B cell (primary cell): ENCODE measurements at regions of chr19 and their contacts with region 1.

Region 1: GRCh38 chr19:41310033-41310758 is at the start of gene CCDC97:
- DNase-seq: peak; percentile 97
- ATAC-seq: peak; percentile 77
- H3K4me3 ChIP-seq: peak within 1 kb of the TSS; percentile 59 to 100 (median 68)
- H3K4me3 Mint-ChIP-seq: peak within 1 kb of the TSS; percentile 98
- H3K27ac ChIP-seq: peak within 1 kb of the TSS; percentile 89 to 100
- H3K27ac Mint-ChIP-seq: peak within 1 kb of the TSS; percentile 100
- H3K4me1 ChIP-seq: peaks cover 49 to 62% of the 10 kb centered on the region in 2 donors
- H3K4me1 Mint-ChIP-seq: peaks cover 64% of the 10 kb centered on the region
- H3K27me3 ChIP-seq: no peaks in the 10 kb centered on the region
- H3K27me3 Mint-ChIP-seq: no peaks in the 10 kb centered on the region
- CTCF ChIP-seq: no peak
- total RNA-seq, gene CCDC97: 68.3 and 78.3 TPM in 2 replicates

Region 2: GRCh38 chr19:40974633-40975037 is 335.6 kb before region 1 on chr19:
- CTCF ChIA-PET with region 1: interaction called, 15 read pairs
- POLR2A ChIA-PET with region 1: no interaction called
- intact Hi-C with region 1: no loop called
- DNase-seq: peak; percentile 81
- ATAC-seq: peak; percentile 64
- H3K4me3 ChIP-seq: no peak overlapping the region
- H3K4me3 Mint-ChIP-seq: no peak overlapping the region
- H3K27ac ChIP-seq: no peak overlapping the region
- H3K27ac Mint-ChIP-seq: no peak overlapping the region
- H3K4me1 ChIP-seq: no peaks in the 10 kb centered on the region
- H3K4me1 Mint-ChIP-seq: peaks cover 1% of the 10 kb centered on the region
- H3K27me3 ChIP-seq: peaks cover 0 to 13% (median 6%) of the 10 kb centered on the region in 4 experiments
- H3K27me3 Mint-ChIP-seq: peaks cover 40% of the 10 kb centered on the region
- CTCF ChIP-seq: peak; percentile 93

Region 3: GRCh38 chr19:41206926-41207750 is 103.1 kb before region 1 on chr19:
- CTCF ChIA-PET with region 1: interaction called, 89 read pairs
- POLR2A ChIA-PET with region 1: interaction called, 4 read pairs
- intact Hi-C with region 1: no loop called
- DNase-seq: no peak
- ATAC-seq: no peak
- H3K4me3 ChIP-seq: no peak overlapping the region
- H3K4me3 Mint-ChIP-seq: no peak overlapping the region
- H3K27ac ChIP-seq: no peak overlapping the region
- H3K27ac Mint-ChIP-seq: no peak overlapping the region
- H3K4me1 ChIP-seq: no peaks in the 10 kb centered on the region
- H3K4me1 Mint-ChIP-seq: no peaks in the 10 kb centered on the region
- H3K27me3 ChIP-seq: no peaks in the 10 kb centered on the region
- H3K27me3 Mint-ChIP-seq: no peaks in the 10 kb centered on the region
- CTCF ChIP-seq: no peak

Region 4: GRCh38 chr19:41327576-41328156 is 17.5 kb after region 1 on chr19:
- CTCF ChIA-PET with region 1: interaction called, 15 read pairs
- POLR2A ChIA-PET with region 1: interaction called, 12 read pairs
- intact Hi-C with region 1: loop called (anchors 1 kb)
- DNase-seq: peak; percentile 90
- ATAC-seq: peak; percentile 78
- H3K4me3 ChIP-seq: peak overlapping the region; percentile 8 to 72 (median 39)
- H3K4me3 Mint-ChIP-seq: peak overlapping the region; percentile 88
- H3K27ac ChIP-seq: peak overlapping the region; percentile 76 to 97
- H3K27ac Mint-ChIP-seq: peak overlapping the region; percentile 98
- H3K4me1 ChIP-seq: peaks cover 59 to 80% of the 10 kb centered on the region in 2 donors
- H3K4me1 Mint-ChIP-seq: peaks cover 72% of the 10 kb centered on the region
- H3K27me3 ChIP-seq: no peaks in the 10 kb centered on the region
- H3K27me3 Mint-ChIP-seq: no peaks in the 10 kb centered on the region
- CTCF ChIP-seq: no peak

Region 5: GRCh38 chr19:41363753-41364523 is 53.7 kb after region 1 on chr19 and contains the start of gene B9D2:
- CTCF ChIA-PET with region 1: interaction called, 18 read pairs
- POLR2A ChIA-PET with region 1: interaction called, 6 read pairs
- intact Hi-C with region 1: no loop called
- DNase-seq: peak; percentile 99
- ATAC-seq: peak; percentile 92
- H3K4me3 ChIP-seq: peak within 1 kb of the TSS; percentile 75 to 97 (median 86)
- H3K4me3 Mint-ChIP-seq: peak within 1 kb of the TSS; percentile 95
- H3K27ac ChIP-seq: peak within 1 kb of the TSS; percentile 99 to 100
- H3K27ac Mint-ChIP-seq: peak within 1 kb of the TSS; percentile 100
- H3K4me1 ChIP-seq: peaks cover 12 to 24% of the 10 kb centered on the region in 2 donors
- H3K4me1 Mint-ChIP-seq: peaks cover 27% of the 10 kb centered on the region
- H3K27me3 ChIP-seq: no peaks in the 10 kb centered on the region
- H3K27me3 Mint-ChIP-seq: no peaks in the 10 kb centered on the region
- CTCF ChIP-seq: no peak
- total RNA-seq, gene B9D2: 17.5 and 17.8 TPM in 2 replicates

Region 6: DNA sequence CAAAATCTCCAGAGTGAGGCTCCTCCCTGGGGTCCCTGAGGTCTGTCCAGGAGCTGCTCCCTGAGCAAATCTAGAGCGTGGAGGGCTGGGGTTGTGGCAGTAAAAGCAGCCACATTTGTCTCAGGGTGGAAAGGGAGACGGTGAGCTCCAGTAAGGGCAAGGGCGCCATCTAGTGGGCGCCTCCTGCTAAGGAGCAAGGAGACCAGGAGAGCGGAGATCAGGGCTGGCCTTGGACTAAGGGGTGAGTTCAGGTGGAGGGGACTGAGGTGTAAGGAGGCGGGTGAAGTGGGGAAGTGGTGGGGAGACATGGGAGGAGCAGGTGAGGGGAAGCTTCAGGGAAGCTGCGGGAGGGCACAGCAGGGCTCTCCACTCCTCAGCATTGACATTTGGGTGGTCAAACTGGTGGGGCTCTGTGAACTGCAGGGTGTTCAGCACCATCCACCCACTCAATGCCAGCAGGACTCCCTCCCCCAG is 260.5 kb after region 1 on chr19:
- CTCF ChIA-PET with region 1: interaction called, 21 read pairs
- POLR2A ChIA-PET with region 1: no interaction called
- intact Hi-C with region 1: no loop called
- DNase-seq: peak; percentile 88
- ATAC-seq: peak; percentile 98
- H3K4me3 ChIP-seq: no peak overlapping the region
- H3K4me3 Mint-ChIP-seq: no peak overlapping the region
- H3K27ac ChIP-seq: no peak overlapping the region
- H3K27ac Mint-ChIP-seq: no peak overlapping the region
- H3K4me1 ChIP-seq: peaks cover 9 to 12% of the 10 kb centered on the region in 2 donors
- H3K4me1 Mint-ChIP-seq: peaks cover 11% of the 10 kb centered on the region
- H3K27me3 ChIP-seq: no peaks in the 10 kb centered on the region
- H3K27me3 Mint-ChIP-seq: peaks cover under 1% of the 10 kb centered on the region
- CTCF ChIP-seq: peak; percentile 91